CD4-positive, alpha-beta memory T cell (primary cell): ENCODE measurements at regions of chr4 and their contacts with region 1.

Region 1: GRCh38 chr4:173025131-173025530 is 143.5 kb upstream of the GALNT7 start:
- DNase-seq: peak in 4 of 5 donors; percentile 32 to 42 (median 37)
- H3K4me3 ChIP-seq: no peak overlapping the region
- H3K4me3 Mint-ChIP-seq: no peak overlapping the region
- H3K27ac ChIP-seq: no peak overlapping the region
- H3K27ac Mint-ChIP-seq: no peak overlapping the region
- H3K4me1 ChIP-seq: no peaks in the 10 kb centered on the region
- H3K4me1 Mint-ChIP-seq: peaks cover 0 to 2% (median 0%) of the 10 kb centered on the region in 4 donors
- H3K27me3 ChIP-seq: peaks cover 4% of the 10 kb centered on the region
- H3K27me3 Mint-ChIP-seq: peaks cover 2 to 3% of the 10 kb centered on the region in 2 donors

Region 2: GRCh38 chr4:173138624-173139023 is 113.5 kb after region 1 on chr4:
- CTCF ChIA-PET with region 1: no interaction called
- POLR2A ChIA-PET with region 1: no interaction called
- intact Hi-C with region 1: no loop called
- DNase-seq: no peak
- H3K4me3 ChIP-seq: no peak overlapping the region
- H3K4me3 Mint-ChIP-seq: no peak overlapping the region
- H3K27ac ChIP-seq: no peak overlapping the region
- H3K27ac Mint-ChIP-seq: no peak overlapping the region
- H3K4me1 ChIP-seq: no peaks in the 10 kb centered on the region
- H3K4me1 Mint-ChIP-seq: no peaks in the 10 kb centered on the region
- H3K27me3 ChIP-seq: no peaks in the 10 kb centered on the region
- H3K27me3 Mint-ChIP-seq: peaks cover 3 to 6% of the 10 kb centered on the region in 2 donors

Region 3: GRCh38 chr4:173257732-173258717 is 232.9 kb after region 1 on chr4:
- CTCF ChIA-PET with region 1: interaction called, 39 read pairs
- POLR2A ChIA-PET with region 1: no interaction called
- intact Hi-C with region 1: loop called (anchors 1 kb)
- DNase-seq: peak; percentile 46 to 55 (median 51)
- H3K4me3 ChIP-seq: no peak overlapping the region
- H3K4me3 Mint-ChIP-seq: no peak overlapping the region
- H3K27ac ChIP-seq: no peak overlapping the region
- H3K27ac Mint-ChIP-seq: no peak overlapping the region
- H3K4me1 ChIP-seq: no peaks in the 10 kb centered on the region
- H3K4me1 Mint-ChIP-seq: peaks cover 4 to 9% (median 6%) of the 10 kb centered on the region in 4 donors
- H3K27me3 ChIP-seq: no peaks in the 10 kb centered on the region
- H3K27me3 Mint-ChIP-seq: no peaks in the 10 kb centered on the region

Region 4: GRCh38 chr4:173264684-173265185 is 239.6 kb after region 1 on chr4:
- CTCF ChIA-PET with region 1: interaction called, 4 read pairs
- POLR2A ChIA-PET with region 1: no interaction called
- intact Hi-C with region 1: loop called (anchors 2 kb)
- DNase-seq: peak; percentile 40 to 48 (median 42)
- H3K4me3 ChIP-seq: no peak overlapping the region
- H3K4me3 Mint-ChIP-seq: peak overlapping the region in 7 of 8 donors; percentile 12 to 72 (median 38)
- H3K27ac ChIP-seq: no peak overlapping the region
- H3K27ac Mint-ChIP-seq: peak overlapping the region; percentile 1 to 80 (median 35)
- H3K4me1 ChIP-seq: peaks cover 27% of the 10 kb centered on the region
- H3K4me1 Mint-ChIP-seq: peaks cover 17 to 28% (median 19%) of the 10 kb centered on the region in 4 donors
- H3K27me3 ChIP-seq: no peaks in the 10 kb centered on the region
- H3K27me3 Mint-ChIP-seq: no peaks in the 10 kb centered on the region